Activated B cell treated with CpG ODN at 0.5 μM for 24 hours (primary cell): ENCODE measurements at regions of chr10 and their contacts with region 1.

Region 1: DNA sequence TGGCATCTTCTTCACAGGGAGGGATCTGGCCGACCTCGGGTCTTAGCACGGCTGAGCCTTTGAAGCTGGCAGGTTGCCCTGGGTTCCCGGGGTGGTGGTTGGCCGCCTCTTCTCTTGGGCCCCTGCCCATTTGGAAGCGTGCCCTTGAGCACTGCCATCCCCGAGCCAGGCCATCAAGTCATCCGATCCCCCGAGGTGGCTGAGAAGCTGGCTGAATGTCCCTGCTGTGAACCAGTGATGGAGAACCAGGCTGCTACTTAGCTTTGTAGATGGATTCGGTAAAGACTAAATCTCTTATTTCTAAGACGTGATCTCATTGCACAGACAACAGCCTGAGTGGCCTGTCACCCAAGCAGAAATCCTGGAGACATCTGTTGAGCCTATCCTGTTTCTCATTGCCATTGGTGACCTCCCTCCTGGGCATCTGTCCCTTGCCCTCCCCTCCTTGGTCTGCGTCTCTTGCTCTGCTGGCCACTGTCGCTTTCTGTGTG is 74.3 kb downstream of the GRK5 start:
- DNase-seq: no peak
- ATAC-seq: no peak
- H3K4me3 Mint-ChIP-seq: no peak overlapping the region
- H3K27ac Mint-ChIP-seq: peak overlapping the region; percentile 32
- H3K4me1 Mint-ChIP-seq: peaks cover 60% of the 10 kb centered on the region
- H3K27me3 Mint-ChIP-seq: no peaks in the 10 kb centered on the region
- CTCF ChIP-seq: no peak

Region 2: GRCh38 chr10:119263951-119264621 is 17.5 kb before region 1 on chr10:
- CTCF ChIA-PET with region 1: no interaction called
- POLR2A ChIA-PET with region 1: interaction called, 11 read pairs
- intact Hi-C with region 1: no loop called
- DNase-seq: no peak
- ATAC-seq: no peak
- H3K4me3 Mint-ChIP-seq: no peak overlapping the region
- H3K27ac Mint-ChIP-seq: peak overlapping the region; percentile 4
- H3K4me1 Mint-ChIP-seq: peaks cover 26% of the 10 kb centered on the region
- H3K27me3 Mint-ChIP-seq: no peaks in the 10 kb centered on the region
- CTCF ChIP-seq: no peak

Region 3: GRCh38 chr10:119270762-119271366 is 10.8 kb before region 1 on chr10:
- CTCF ChIA-PET with region 1: no interaction called
- POLR2A ChIA-PET with region 1: interaction called, 9 read pairs
- intact Hi-C with region 1: loop called (anchors 1 kb)
- DNase-seq: peak; percentile 45
- ATAC-seq: peak; percentile 49
- H3K4me3 Mint-ChIP-seq: peak overlapping the region; percentile 69
- H3K27ac Mint-ChIP-seq: peak overlapping the region; percentile 96
- H3K4me1 Mint-ChIP-seq: peaks cover 87% of the 10 kb centered on the region
- H3K27me3 Mint-ChIP-seq: no peaks in the 10 kb centered on the region
- CTCF ChIP-seq: no peak

Region 4: DNA sequence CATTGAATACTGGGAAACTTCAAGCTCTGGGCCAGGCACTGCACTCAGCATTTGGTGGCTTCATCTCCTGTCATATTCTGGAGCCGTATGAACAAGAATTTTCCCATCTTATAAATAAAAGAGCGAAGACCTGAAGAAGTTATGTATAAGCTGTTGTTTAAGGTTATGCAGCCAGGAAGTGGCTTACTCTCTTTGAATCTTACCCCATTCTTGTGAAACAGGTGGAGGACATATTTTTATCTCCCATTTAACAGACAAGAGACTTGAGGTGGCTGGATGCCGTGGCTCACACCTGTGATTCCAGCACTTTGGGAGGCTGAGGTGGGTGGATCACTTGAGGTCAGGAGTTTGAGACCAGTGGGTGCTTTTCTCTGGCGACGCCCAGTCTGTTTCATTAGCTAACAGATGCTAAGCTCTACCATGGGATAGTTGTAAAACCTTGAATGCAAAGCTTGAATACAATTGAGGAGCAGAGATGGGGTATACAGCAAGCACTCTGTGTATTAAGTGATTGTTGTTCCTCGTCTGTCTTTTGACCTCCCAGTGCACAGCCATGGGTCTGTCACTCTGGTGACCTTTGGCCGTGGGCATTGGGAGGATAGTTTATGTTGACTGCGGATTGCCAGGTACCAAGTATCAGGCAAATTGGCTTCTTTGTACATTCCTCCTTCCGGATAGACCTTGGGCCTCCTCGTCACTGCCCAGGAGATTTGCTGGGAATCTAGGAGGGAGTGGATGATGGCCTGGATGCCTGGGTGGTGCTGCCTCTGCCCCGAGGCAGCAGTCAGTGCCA is 11.5 kb after region 1 on chr10:
- CTCF ChIA-PET with region 1: no interaction called
- POLR2A ChIA-PET with region 1: interaction called, 4 read pairs
- intact Hi-C with region 1: loop called (anchors 1 kb)
- DNase-seq: no peak
- ATAC-seq: no peak
- H3K4me3 Mint-ChIP-seq: no peak overlapping the region
- H3K27ac Mint-ChIP-seq: peak overlapping the region; percentile 78
- H3K4me1 Mint-ChIP-seq: peaks cover 46% of the 10 kb centered on the region
- H3K27me3 Mint-ChIP-seq: no peaks in the 10 kb centered on the region
- CTCF ChIP-seq: no peak

Region 5: DNA sequence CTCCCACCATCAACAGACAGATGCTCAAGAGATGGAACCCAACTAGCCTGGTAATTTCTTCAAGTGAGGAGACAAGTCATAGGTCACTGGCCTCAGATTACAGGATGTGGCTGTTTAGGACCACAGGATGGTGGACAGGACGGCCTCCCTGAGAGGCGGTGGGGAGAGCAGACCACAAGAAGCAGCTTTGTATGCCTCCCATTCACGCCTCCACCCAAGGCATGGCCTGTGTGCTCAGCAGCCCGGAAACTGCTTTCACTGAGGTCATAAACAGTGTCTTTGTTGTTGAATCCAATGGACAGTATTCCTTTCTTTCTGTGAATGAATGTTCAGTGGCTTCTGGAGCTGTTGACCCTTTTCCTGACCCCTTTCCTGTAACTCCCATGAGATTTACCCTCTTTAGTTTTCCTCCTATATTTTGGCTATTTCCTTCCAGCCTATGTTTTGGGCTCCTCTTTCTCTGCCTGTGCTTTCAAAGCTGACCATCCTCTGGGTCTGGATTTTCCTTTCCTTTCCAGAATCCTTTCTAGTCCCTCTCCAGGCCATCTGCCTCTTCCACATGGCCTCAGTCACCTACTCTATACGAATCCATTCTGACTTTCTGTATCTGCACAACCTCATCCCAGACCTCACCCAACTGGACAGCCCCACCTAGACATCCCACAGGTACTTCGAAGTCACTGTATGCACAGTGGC is 411.8 kb after region 1 on chr10:
- CTCF ChIA-PET with region 1: no interaction called
- POLR2A ChIA-PET with region 1: no interaction called
- intact Hi-C with region 1: no loop called
- DNase-seq: no peak
- ATAC-seq: no peak
- H3K4me3 Mint-ChIP-seq: no peak overlapping the region
- H3K27ac Mint-ChIP-seq: no peak overlapping the region
- H3K4me1 Mint-ChIP-seq: peaks cover 43% of the 10 kb centered on the region
- H3K27me3 Mint-ChIP-seq: no peaks in the 10 kb centered on the region
- CTCF ChIP-seq: no peak